ENCODE measurements at regions of chr6 and their contacts with region 1.

Region 1: GRCh38 chr6:117555882-117556498 is 46.3 kb downstream of the GOPC start:
- DNase-seq: no peak
- ATAC-seq: peak; percentile 43 to 55
- H3K4me3 ChIP-seq: no peak overlapping the region
- H3K27ac ChIP-seq: no peak overlapping the region
- H3K4me1 ChIP-seq: peaks cover 4 to 6% of the 10 kb centered on the region in 2 donors
- H3K27me3 ChIP-seq: no peaks in the 10 kb centered on the region
- CTCF ChIP-seq: peak; percentile 73 to 91 (median 86)
- POLR2A ChIP-seq: no peak

Region 2: GRCh38 chr6:116975600-116975999 is 580.4 kb before region 1 on chr6:
- in situ Hi-C with region 1: loop called in 1 of 4 experiments (anchors 25 kb)
- intact Hi-C with region 1: no loop called
- DNase-seq: peak; percentile 65 to 68
- ATAC-seq: peak; percentile 86 to 94
- H3K4me3 ChIP-seq: no peak overlapping the region
- H3K27ac ChIP-seq: peak overlapping the region; percentile 78 to 91 (median 88)
- H3K4me1 ChIP-seq: peaks cover 27 to 30% of the 10 kb centered on the region in 2 donors
- H3K27me3 ChIP-seq: no peaks in the 10 kb centered on the region
- CTCF ChIP-seq: no peak
- POLR2A ChIP-seq: peak; percentile 39 to 66

Region 3: DNA sequence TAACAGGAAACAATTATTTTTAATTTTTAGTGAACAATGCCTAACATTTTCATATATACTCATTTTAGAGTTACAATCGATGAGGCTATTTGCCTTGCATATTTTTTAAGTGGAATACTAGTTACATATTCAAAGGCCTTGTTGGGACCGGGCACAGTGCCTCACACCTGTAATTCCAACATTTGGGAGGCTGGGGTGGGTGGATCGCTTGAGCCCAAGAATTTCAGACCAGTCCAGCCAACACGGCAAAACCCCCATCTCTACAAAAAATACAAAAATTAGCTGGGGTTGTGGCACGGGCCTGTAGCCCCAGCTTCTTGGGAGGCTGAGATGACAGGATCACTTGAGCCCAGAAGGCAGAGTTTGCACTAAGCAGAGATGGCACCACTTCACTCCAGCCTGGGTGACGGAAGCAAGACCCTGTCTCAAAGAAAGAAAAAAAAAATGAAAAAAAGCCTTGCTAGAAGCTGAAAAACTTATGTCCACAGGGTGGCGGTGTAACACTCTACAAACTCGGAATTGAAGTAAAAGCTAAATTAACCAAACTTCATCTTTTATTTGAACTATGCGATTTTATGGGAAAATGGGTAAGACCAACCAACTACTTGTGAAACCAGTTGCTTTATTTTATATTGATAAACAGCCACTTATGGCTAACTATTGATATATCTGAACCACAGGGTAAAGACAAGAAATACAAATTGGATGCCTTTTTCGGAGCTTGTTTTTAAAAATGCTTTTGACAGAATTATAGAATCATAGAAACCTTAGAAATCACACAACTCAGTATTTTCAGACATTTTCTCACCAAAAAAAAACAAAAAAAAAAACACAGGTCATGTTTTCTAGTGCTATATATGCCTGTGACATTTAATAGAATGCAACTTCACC is 106.2 kb before region 1 on chr6:
- in situ Hi-C with region 1: loop called (anchors 5 to 10 kb)
- intact Hi-C with region 1: loop called (anchors 1 kb)
- DNase-seq: peak; percentile 6 to 12
- ATAC-seq: no peak
- H3K4me3 ChIP-seq: no peak overlapping the region
- H3K27ac ChIP-seq: no peak overlapping the region
- H3K4me1 ChIP-seq: peaks cover 0 to 6% of the 10 kb centered on the region in 2 donors
- H3K27me3 ChIP-seq: no peaks in the 10 kb centered on the region
- CTCF ChIP-seq: peak; percentile 52 to 78 (median 66)
- POLR2A ChIP-seq: no peak

Measured in gastrocnemius medialis (tissue), 4 donors.